ENCODE measurements at regions of chr10 and their contacts with region 1.

Region 1: GRCh38 chr10:101042667-101043355 is 11.8 kb downstream of the SFXN3 start:
- H3K4me3 ChIP-seq: peak overlapping the region; percentile 53
- H3K27ac ChIP-seq: peak overlapping the region; percentile 80
- H3K4me1 ChIP-seq: peaks cover 5% of the 10 kb centered on the region; the same call in 1 of the 2 replicates
- CTCF ChIP-seq: no peak

Region 2: DNA sequence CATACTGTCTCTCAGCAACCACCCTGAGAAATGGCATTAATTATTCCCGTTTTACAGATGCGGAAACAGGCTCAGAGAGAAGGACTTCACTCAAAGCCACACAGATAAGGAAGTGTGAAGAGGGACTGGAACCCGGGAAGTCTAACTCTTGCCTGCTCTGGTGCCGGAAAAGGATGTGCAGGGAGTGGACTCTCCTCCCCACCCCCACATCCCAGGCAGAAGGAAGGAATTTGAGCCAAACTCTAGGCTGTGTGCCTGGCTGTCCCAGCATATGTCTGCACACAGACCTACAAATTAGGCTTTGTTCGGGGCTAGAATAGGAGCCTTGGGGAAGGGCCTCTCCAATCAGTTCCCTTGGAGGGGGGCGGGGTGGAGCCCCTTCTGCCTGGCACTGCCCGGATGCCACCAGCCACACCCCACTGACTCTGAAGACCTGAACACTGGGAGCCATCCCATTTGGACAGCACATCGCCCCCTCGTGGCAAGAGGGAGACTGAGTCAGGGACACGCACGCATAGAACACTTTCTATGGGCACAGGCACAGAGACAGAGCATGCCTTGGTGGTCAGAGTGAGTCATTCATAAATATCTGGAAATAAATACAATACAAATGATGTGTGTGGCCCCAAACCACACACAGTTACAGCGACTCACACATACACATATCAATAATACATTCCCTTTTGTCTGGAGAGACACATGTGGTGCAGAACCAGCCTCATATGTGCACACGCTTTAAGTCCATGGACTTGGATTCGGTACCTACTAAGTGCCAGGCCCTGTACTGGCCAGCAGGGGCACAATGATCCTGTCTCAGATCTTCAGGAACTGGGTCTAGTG is 30.1 kb before region 1 on chr10:
- CTCF ChIA-PET with region 1: interaction called, 18 read pairs
- POLR2A ChIA-PET with region 1: interaction called, 8 read pairs
- H3K4me3 ChIP-seq: no peak overlapping the region
- H3K27ac ChIP-seq: no peak overlapping the region
- H3K4me1 ChIP-seq: peaks cover 4% of the 10 kb centered on the region; the same call in 1 of the 2 replicates
- CTCF ChIP-seq: peak; percentile 98

Region 3: GRCh38 chr10:101018600-101019439 is 24.0 kb before region 1 on chr10:
- CTCF ChIA-PET with region 1: interaction called, 18 read pairs
- POLR2A ChIA-PET with region 1: interaction called, 8 read pairs
- H3K4me3 ChIP-seq: no peak overlapping the region
- H3K27ac ChIP-seq: no peak overlapping the region
- H3K4me1 ChIP-seq: no peaks in the 10 kb centered on the region; the same call in 1 of the 2 replicates
- CTCF ChIP-seq: peak; percentile 95

Region 4: DNA sequence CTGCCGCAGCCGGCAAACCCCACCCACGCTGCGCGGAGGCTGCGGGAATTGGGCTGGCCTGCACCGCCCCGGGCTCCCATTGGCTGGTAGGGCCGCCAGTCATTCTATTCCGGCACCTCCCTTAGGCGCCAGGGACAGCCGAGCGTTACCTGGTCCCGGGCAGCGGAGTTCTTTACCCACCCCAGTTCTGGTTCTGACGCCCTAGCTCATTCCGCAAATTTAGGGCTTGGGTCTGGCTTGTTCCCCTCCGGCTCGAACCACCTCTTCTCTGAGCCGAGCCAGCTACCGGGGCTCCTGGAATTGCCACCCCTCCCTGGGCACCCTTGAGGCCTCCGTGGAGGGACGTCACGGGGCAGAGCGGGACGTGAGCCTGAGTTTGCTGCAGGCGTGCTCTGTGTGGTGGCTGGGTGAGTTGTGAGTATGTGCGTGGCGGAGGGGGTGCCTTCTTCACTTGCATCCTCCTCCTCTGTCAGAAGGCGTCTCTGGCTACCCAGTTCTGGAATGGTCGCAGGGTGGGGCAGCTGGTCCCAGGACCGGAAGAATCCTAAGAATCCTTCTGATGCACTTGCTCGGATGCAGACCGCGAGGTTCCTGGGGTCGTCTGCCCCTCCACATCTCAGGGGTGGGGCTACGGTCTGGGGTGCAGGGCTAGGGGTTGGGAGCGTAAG is 11.5 kb before region 1 on chr10 and contains the starts of genes PDZD7 and SFXN3:
- CTCF ChIA-PET with region 1: interaction called, 51 read pairs
- POLR2A ChIA-PET with region 1: interaction called, 29 read pairs
- H3K4me3 ChIP-seq: peak within 1 kb of the TSS; percentile 45
- H3K27ac ChIP-seq: peak within 1 kb of the TSS; percentile 64
- H3K4me1 ChIP-seq: peaks cover 20% of the 10 kb centered on the region
- CTCF ChIP-seq: no peak

Region 5: DNA sequence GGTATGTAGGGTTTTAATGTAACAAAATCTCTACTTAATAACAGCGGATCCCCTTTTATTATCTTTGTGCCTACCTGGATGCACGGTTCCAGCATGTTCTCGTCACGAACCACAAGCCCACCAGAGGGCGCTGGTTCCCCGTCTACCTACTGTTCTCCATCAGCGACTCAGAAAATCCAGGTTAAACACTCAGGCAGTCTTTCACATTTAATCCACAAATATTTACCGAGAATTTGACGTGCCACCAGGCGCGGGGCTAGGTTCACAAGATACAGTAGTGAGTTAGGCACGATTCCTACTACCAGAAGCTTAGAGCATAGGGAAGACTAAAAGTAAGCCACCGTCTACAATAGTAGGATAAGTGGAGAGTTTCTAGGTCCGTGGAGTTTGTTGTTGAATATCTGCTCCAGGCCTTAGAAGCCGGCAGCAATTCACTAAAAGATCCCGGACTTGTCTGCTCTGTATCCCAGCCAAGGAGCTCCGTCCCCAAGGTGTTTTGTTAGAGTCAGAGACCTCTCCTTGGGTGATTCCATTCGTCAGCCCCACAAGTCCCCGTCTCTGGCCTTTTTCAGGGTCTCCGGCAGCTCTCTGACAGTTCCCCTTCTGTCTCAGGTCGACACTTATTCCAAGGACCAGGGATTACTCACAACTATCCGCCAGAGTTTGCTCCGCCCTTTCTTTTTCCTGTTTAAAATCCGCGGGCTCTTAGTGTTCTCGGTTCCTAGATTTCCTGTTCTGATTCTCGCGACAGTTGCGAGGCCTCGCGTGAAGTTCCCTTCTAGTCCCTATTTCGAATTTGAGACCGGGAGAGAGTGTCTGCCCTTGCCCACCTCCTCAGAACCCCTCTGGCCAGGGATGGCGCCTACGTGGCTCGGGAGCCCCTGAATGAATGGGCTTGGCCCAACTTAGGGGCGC is 17.5 kb after region 1 on chr10:
- CTCF ChIA-PET with region 1: interaction called, 112 read pairs
- POLR2A ChIA-PET with region 1: interaction called, 32 read pairs
- H3K4me3 ChIP-seq: peak overlapping the region; percentile 91
- H3K27ac ChIP-seq: peak overlapping the region; percentile 97
- H3K4me1 ChIP-seq: peaks cover 18% of the 10 kb centered on the region
- CTCF ChIP-seq: peak; percentile 75

Region 6: GRCh38 chr10:101067356-101068083 is 24.7 kb after region 1 on chr10:
- CTCF ChIA-PET with region 1: interaction called, 49 read pairs
- POLR2A ChIA-PET with region 1: interaction called, 25 read pairs
- H3K4me3 ChIP-seq: peak overlapping the region; percentile 49
- H3K27ac ChIP-seq: peak overlapping the region; percentile 66
- H3K4me1 ChIP-seq: peaks cover 15% of the 10 kb centered on the region
- CTCF ChIP-seq: peak; percentile 91

Region 7: GRCh38 chr10:101655570-101655969 is 612.8 kb after region 1 on chr10:
- CTCF ChIA-PET with region 1: no interaction called
- POLR2A ChIA-PET with region 1: no interaction called
- H3K4me3 ChIP-seq: no peak overlapping the region
- H3K27ac ChIP-seq: no peak overlapping the region
- H3K4me1 ChIP-seq: no peaks in the 10 kb centered on the region
- CTCF ChIP-seq: no peak